ENCODE measurements at regions of chr16 and their contacts with region 1.

Region 1: DNA sequence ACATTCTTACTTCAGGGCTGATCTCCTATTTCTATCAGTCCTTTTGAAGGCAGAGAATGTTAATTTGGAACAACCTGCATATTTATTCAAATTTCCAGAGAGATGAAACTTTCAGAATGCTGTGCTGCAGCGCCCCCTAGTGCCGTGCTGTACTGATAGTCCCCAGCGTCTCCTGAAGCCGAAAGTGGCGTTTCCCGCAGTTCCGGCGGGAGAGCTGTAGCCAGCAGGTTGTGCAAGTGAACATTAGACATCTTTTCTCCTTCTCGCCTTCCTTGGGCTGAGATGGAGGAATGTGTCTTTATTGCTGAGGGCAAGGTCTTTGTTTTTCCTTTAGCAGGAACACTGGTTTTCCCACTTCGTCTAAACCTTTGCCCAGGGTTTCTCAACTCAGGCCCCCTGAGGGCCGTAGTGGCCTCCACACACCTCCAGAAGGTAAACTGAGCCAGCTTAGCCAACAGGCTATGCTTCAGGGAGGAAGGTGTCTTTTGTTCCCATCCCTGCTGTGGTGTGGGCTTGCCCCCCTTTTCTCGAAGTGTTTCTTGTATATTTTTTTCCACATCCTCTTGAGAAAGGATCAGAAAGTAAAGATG is 26.4 kb downstream of the USP10 start:
- DNase-seq: peak; percentile 79 to 85 (median 84)
- H3K4me3 ChIP-seq: peak overlapping the region in 6 of 7 experiments; percentile 52 to 78 (median 69)
- H3K27ac ChIP-seq: peak overlapping the region; percentile 20 to 69
- H3K4me1 ChIP-seq: peaks cover 29 to 88% (median 51%) of the 10 kb centered on the region in 4 experiments
- H3K27me3 ChIP-seq: no peaks in the 10 kb centered on the region

Region 2: GRCh38 chr16:84687715-84688114 is 38.5 kb before region 1 on chr16:
- CTCF ChIA-PET with region 1: no interaction called
- POLR2A ChIA-PET with region 1: no interaction called
- DNase-seq: peak; percentile 8 to 54 (median 45)
- H3K4me3 ChIP-seq: no peak overlapping the region
- H3K27ac ChIP-seq: no peak overlapping the region
- H3K4me1 ChIP-seq: peaks cover 0 to 3% (median under 1%) of the 10 kb centered on the region in 4 experiments
- H3K27me3 ChIP-seq: peaks cover 0 to 7% (median 0%) of the 10 kb centered on the region in 5 experiments

Region 3: GRCh38 chr16:84699712-84700445 is 26.3 kb before region 1 on chr16 and contains the start of gene USP10:
- CTCF ChIA-PET with region 1: interaction called, 11 read pairs
- POLR2A ChIA-PET with region 1: no interaction called
- DNase-seq: peak; percentile 75 to 84 (median 84)
- H3K4me3 ChIP-seq: peak within 1 kb of the TSS; percentile 92 to 99 (median 97)
- H3K27ac ChIP-seq: peak within 1 kb of the TSS; percentile 75 to 88
- H3K4me1 ChIP-seq: peaks cover 10 to 32% (median 18%) of the 10 kb centered on the region in 4 experiments
- H3K27me3 ChIP-seq: no peaks in the 10 kb centered on the region

Region 4: GRCh38 chr16:84714028-84714427 is 12.1 kb before region 1 on chr16:
- CTCF ChIA-PET with region 1: interaction called, 52 read pairs
- POLR2A ChIA-PET with region 1: interaction called, 4 read pairs
- DNase-seq: peak in 2 of 3 donors; percentile 30 to 45
- H3K4me3 ChIP-seq: peak overlapping the region in 1 of 7 experiments; percentile 36
- H3K27ac ChIP-seq: no peak overlapping the region
- H3K4me1 ChIP-seq: peaks cover 2 to 32% (median 18%) of the 10 kb centered on the region in 4 experiments
- H3K27me3 ChIP-seq: no peaks in the 10 kb centered on the region

Region 5: DNA sequence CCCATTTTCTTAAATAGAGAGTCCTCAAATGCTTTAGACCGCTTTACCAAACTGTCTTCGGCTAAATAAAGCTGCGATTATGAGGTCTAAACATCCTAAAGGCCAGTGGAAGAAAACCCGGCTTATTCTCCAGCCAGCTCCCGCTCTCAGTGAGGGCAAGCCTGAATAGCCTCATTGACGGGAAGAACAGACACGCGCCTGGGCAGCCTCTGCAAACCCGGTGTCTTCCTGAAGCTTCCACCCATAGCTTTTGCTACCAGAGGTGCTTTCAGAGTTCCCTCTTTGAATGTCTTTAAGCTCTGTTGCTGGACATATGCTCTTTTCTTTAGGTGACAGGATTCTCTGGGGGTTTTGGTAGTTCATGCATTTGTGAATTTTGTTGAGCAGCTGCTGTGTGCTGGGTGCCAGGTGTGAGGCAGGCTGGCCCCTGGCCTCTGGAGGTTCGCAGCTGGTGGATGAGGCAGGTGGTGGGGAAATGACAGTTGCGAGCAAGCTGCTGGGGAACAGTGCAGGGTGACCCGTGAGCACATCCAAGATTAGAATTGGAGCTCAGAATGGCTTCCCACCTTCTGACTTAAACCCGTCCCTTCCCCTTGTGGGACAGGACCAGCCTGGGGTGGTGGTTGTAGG is 138.3 kb after region 1 on chr16:
- CTCF ChIA-PET with region 1: no interaction called
- POLR2A ChIA-PET with region 1: no interaction called
- DNase-seq: no peak
- H3K4me3 ChIP-seq: no peak overlapping the region
- H3K27ac ChIP-seq: no peak overlapping the region
- H3K4me1 ChIP-seq: no peaks in the 10 kb centered on the region
- H3K27me3 ChIP-seq: peaks cover 0 to 15% (median 1%) of the 10 kb centered on the region in 5 experiments